H1 (cell line): ENCODE measurements at regions of chr12 and their contacts with region 1.

Region 1: GRCh38 chr12:575948-576612 is 87.2 kb downstream of the NINJ2 start:
- DNase-seq: peak in 1 of 2 experiments; percentile 96
- H3K4me3 ChIP-seq: no peak overlapping the region; a peak in 1 of 8 replicates
- H3K27ac ChIP-seq: no peak overlapping the region
- H3K4me1 ChIP-seq: peaks cover 0 to 10% (median 3%) of the 10 kb centered on the region in 4 experiments; a peak in 6 of 7 replicates
- H3K27me3 ChIP-seq: peaks cover 0 to 9% (median 7%) of the 10 kb centered on the region in 4 experiments; a peak in 6 of 7 replicates
- CTCF ChIP-seq: peak; percentile 93 to 97 (median 94)
- EP300 ChIP-seq: no peak
- POLR2A ChIP-seq: peak in 1 of 2 experiments; percentile 43; a peak in 1 of 3 replicates
- RAD21 ChIP-seq: peak; percentile 82 to 89

Region 2: GRCh38 chr12:332581-333205 is 243.4 kb before region 1 on chr12:
- CTCF ChIA-PET with region 1: no interaction called
- POLR2A ChIA-PET with region 1: no interaction called
- DNase-seq: no peak
- H3K4me3 ChIP-seq: no peak overlapping the region
- H3K27ac ChIP-seq: no peak overlapping the region
- H3K4me1 ChIP-seq: no peaks in the 10 kb centered on the region
- H3K27me3 ChIP-seq: no peaks in the 10 kb centered on the region
- CTCF ChIP-seq: no peak
- EP300 ChIP-seq: no peak
- POLR2A ChIP-seq: no peak
- RAD21 ChIP-seq: no peak

Region 3: DNA sequence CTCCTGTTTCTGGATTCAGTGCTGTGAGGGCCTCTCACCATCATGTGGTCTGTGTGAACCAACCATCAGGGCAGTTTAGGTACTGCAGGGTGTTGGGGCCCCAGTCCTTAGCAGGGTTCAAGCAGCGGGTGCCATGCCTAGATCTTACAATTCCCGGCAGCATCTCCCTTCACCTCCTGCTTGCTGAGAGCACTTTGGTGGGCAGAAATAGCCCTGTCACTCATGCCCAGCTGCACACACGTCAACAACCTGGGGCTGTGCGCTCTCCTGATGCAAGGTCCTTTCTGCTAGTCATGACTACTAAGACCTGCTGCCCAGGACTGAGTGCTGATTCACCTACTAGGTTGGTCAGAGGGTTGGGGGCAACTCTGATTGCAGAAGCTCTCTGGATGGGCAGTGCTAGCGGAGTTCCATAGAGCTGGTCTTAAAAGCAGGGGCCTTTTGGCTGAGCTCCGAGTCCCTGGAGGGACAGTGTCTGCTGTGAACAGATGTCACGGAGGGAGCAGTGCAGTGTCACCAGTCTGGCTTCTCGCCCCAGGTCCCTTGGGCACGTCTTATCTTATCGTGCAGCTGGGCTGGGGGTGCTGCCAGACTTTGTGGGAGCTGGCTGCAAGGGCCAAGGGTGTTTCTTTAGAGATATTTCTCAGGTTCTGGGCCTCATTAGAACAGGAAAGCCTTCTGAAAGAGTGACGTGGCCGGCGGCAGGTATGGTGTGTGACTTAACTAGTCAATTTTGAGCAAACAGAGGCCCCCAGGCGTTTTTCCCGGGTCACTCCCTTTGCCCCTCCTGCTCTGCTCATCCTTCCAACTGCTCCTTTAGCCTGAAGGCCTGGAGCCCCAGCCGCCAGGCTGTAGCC is 15.3 kb after region 1 on chr12:
- CTCF ChIA-PET with region 1: interaction called, 17 read pairs
- POLR2A ChIA-PET with region 1: interaction called, 4 read pairs
- DNase-seq: no peak
- H3K4me3 ChIP-seq: no peak overlapping the region
- H3K27ac ChIP-seq: no peak overlapping the region
- H3K4me1 ChIP-seq: no peaks in the 10 kb centered on the region
- H3K27me3 ChIP-seq: no peaks in the 10 kb centered on the region
- CTCF ChIP-seq: peak in 2 of 3 experiments; percentile 11 to 41; a peak in 2 of 4 replicates
- EP300 ChIP-seq: no peak
- POLR2A ChIP-seq: no peak
- RAD21 ChIP-seq: no peak; a peak in 1 of 4 replicates

Region 4: DNA sequence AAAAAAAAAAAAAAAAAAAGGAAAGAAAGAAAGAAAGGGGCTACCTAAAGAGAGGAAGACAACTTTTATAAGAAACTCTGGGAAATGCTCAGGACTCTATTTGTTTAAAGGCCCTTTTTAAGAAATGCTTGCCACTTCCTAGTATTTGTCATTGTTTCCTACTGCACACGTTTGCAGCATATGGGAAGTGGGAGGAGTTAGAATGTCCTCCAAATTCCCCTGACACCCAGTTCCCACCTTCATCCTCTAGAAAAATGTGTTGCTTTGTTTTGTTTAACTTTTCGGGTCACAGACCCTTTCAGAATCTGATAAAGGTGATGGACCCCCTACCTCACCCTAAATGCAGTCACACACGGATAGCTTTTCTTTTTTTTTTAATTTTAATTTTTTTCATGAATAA is 46.3 kb after region 1 on chr12:
- CTCF ChIA-PET with region 1: interaction called, 13 read pairs
- POLR2A ChIA-PET with region 1: interaction called, 4 read pairs
- DNase-seq: no peak
- H3K4me3 ChIP-seq: no peak overlapping the region
- H3K27ac ChIP-seq: no peak overlapping the region
- H3K4me1 ChIP-seq: peaks cover 4 to 8% (median 7%) of the 10 kb centered on the region in 4 experiments; a peak in 4 of 7 replicates
- H3K27me3 ChIP-seq: no peaks in the 10 kb centered on the region
- CTCF ChIP-seq: no peak
- EP300 ChIP-seq: no peak
- POLR2A ChIP-seq: no peak
- RAD21 ChIP-seq: no peak

Region 5: DNA sequence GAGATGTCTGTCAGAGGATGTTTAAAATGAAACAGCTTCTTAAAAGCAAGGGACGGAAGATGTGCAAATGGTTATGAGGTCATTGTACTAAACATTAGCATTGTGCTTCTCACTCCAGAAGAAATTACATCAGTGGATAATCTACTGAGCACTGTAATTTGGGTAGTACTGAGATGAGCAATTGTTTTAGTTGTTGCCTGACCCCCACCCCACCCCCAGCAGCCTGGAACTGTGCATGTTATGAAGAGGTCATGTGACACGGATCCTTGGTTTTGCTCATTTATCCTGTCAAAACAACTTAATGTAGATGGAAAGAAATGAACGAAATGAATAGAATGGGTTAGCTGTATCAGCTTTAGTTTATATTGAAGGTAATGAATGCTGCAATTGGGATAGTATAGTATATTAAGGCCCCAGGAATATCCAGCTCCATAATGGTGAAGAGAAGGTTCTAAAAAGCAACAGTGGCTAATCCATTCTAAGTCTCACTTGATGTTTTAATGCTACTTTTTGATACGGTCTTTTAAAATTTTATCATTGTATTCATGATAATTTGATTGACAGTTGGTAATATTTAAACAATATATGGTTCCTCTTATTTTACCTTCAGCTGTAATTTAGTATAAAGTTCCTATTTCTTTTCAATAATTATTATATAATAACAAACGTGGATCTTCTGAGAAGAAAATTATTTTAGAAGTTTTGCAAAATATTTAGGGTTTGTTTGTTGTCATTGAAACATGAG is 234.8 kb after region 1 on chr12:
- CTCF ChIA-PET with region 1: interaction called, 41 read pairs
- POLR2A ChIA-PET with region 1: no interaction called
- DNase-seq: no peak
- H3K4me3 ChIP-seq: no peak overlapping the region
- H3K27ac ChIP-seq: no peak overlapping the region
- H3K4me1 ChIP-seq: 0 out of 7 replicates have a peak, but pooled peaks cover 0 to 3% (median 0%) of the 10 kb centered on the region in 4 experiments
- H3K27me3 ChIP-seq: no peaks in the 10 kb centered on the region
- CTCF ChIP-seq: no peak
- EP300 ChIP-seq: no peak
- POLR2A ChIP-seq: no peak
- RAD21 ChIP-seq: no peak